Activated CD4-positive, alpha-beta memory T cell treated with anti-CD3 and anti-CD28 coated beads, Interleukin-2, amount 10 ng/mL, durations not matched to agents 7 days and 5 days (primary cell): ENCODE measurements at regions of chr13 and their contacts with region 1.

Region 1: DNA sequence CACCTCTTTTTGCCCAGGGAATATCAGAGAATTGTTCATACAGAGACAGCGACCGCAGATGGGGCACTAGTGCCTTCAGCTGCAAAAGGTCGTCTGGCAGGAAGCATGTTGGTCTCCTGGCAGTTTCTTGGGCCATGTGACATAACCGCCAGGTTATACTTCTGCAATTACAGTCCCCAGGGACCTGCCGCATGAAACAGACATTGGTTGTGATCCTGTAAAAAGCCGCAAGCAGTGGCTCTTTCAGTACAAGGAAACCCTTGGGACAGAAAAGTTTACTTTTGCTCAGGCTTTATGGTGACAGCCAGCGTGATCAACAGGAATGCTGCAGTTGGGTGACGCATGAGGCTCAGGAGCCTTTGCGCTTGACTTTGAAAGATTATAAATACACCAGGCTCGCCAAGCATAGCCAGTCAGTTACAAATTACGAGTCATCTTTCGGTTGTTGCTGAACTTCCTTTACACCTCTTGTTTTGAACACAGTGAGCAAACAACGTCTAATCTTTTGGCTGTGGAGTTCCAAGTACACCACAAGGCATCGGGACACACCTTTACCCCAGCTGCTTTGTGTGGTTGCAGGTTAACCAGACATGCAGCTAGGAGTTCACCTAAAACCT is 50.5 kb upstream of the UBE2L5 start:
- DNase-seq: peak; percentile 73
- H3K4me3 Mint-ChIP-seq: peak overlapping the region; percentile 78
- H3K27ac Mint-ChIP-seq: peak overlapping the region; percentile 96
- H3K4me1 Mint-ChIP-seq: peaks cover 79% of the 10 kb centered on the region
- H3K27me3 Mint-ChIP-seq: no peaks in the 10 kb centered on the region

Region 2: GRCh38 chr13:30125422-30126073 is 246.2 kb before region 1 on chr13:
- CTCF ChIA-PET with region 1: no interaction called
- POLR2A ChIA-PET with region 1: no interaction called
- DNase-seq: no peak
- H3K4me3 Mint-ChIP-seq: no peak overlapping the region
- H3K27ac Mint-ChIP-seq: no peak overlapping the region
- H3K4me1 Mint-ChIP-seq: peaks cover 18% of the 10 kb centered on the region
- H3K27me3 Mint-ChIP-seq: no peaks in the 10 kb centered on the region

Region 3: GRCh38 chr13:30148171-30148754 is 223.5 kb before region 1 on chr13:
- CTCF ChIA-PET with region 1: interaction called, 6 read pairs
- POLR2A ChIA-PET with region 1: interaction called, 14 read pairs
- DNase-seq: peak; percentile 75
- H3K4me3 Mint-ChIP-seq: peak overlapping the region; percentile 5
- H3K27ac Mint-ChIP-seq: peak overlapping the region; percentile 96
- H3K4me1 Mint-ChIP-seq: peaks cover 90% of the 10 kb centered on the region
- H3K27me3 Mint-ChIP-seq: no peaks in the 10 kb centered on the region

Region 4: GRCh38 chr13:30346153-30346788 is 25.5 kb before region 1 on chr13:
- CTCF ChIA-PET with region 1: interaction called, 13 read pairs
- POLR2A ChIA-PET with region 1: interaction called, 75 read pairs
- DNase-seq: peak; percentile 91
- H3K4me3 Mint-ChIP-seq: peak overlapping the region; percentile 38
- H3K27ac Mint-ChIP-seq: peak overlapping the region; percentile 60
- H3K4me1 Mint-ChIP-seq: peaks cover 37% of the 10 kb centered on the region
- H3K27me3 Mint-ChIP-seq: no peaks in the 10 kb centered on the region

Region 5: GRCh38 chr13:30395192-30396084 is 23.7 kb after region 1 on chr13:
- CTCF ChIA-PET with region 1: interaction called, 28 read pairs
- POLR2A ChIA-PET with region 1: interaction called, 265 read pairs
- DNase-seq: peak; percentile 84
- H3K4me3 Mint-ChIP-seq: peak overlapping the region; percentile 83
- H3K27ac Mint-ChIP-seq: peak overlapping the region; percentile 98
- H3K4me1 Mint-ChIP-seq: peaks cover 26% of the 10 kb centered on the region
- H3K27me3 Mint-ChIP-seq: no peaks in the 10 kb centered on the region

Region 6: GRCh38 chr13:30454991-30455390 is 83.2 kb after region 1 on chr13:
- CTCF ChIA-PET with region 1: no interaction called
- POLR2A ChIA-PET with region 1: interaction called, 12 read pairs
- DNase-seq: no peak
- H3K4me3 Mint-ChIP-seq: no peak overlapping the region
- H3K27ac Mint-ChIP-seq: no peak overlapping the region
- H3K4me1 Mint-ChIP-seq: peaks cover 12% of the 10 kb centered on the region
- H3K27me3 Mint-ChIP-seq: no peaks in the 10 kb centered on the region